K562 (cell line): ENCODE measurements at regions of chr6 and their contacts with region 1.

Region 1: DNA sequence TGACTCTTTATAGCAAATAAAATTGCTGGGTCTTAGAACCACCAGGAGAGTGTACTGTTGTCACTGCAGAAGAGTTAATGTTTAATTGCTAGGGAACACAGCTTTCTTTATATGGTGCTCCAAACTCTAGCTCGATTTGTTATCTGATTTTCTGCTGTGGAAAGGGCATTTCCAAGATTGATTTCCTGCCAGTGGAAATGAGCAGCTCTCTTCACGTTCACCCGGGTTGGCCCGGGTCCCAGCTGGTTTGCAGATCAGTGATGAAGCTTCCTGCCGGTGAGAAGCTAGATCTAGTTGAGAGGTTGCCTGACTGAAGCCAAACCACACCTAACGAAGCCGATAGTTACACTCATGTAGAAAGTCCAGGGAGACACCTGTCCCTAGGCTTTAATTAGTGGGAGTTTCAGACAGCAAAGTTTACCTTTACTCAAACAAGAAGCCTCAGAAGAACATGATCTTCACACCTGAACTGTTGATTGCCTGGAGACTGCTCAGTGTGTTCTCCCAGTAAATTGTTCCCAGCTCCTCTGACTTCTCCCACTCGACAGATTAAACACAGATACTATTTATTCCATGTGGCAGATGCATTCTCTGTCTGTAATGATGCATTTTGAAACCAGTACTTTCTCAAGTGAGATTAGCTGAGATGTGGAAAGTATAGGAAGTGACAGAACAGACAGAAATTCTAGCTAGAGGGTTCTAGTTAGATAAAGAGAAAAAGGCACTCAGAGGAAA is 27.8 kb downstream of the PAQR8 start:
- DNase-seq: peak; percentile 51 to 66 (median 60)
- ATAC-seq: peak; percentile 70
- H3K4me3 ChIP-seq: 0 out of 2 replicates have a peak overlapping the region, but pooled peaks have one; percentile 2
- H3K27ac ChIP-seq: peak overlapping the region; percentile 75
- H3K4me1 ChIP-seq: peaks cover 11 to 37% of the 10 kb centered on the region in 2 experiments; a peak in 4 of 5 replicates
- H3K27me3 ChIP-seq: no peaks in the 10 kb centered on the region
- CTCF ChIP-seq: no peak
- EP300 ChIP-seq: no peak
- POLR2A ChIP-seq: no peak
- RAD21 ChIP-seq: peak in 1 of 2 experiments; percentile 23; a peak in 3 of 4 replicates

Region 2: DNA sequence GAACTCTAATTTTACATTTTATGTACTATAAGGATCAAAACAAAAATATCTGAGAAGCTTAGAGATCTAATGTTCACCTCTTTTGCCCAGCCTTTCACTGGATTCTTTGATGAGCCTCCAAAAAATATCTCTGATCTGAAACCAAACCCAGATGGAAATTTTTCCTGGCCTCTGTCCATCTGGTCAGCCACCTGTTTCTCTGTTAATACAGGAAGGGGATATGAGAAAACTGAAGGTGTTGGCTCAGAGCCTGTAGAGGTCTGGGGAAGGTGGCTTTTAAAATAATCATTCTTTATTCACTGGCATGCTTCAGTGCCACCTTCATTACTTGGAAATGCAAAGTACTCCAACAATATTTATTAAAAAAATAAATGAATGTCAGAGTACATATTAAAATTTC is 96.7 kb before region 1 on chr6:
- CTCF ChIA-PET with region 1: no interaction called
- POLR2A ChIA-PET with region 1: no interaction called
- in situ Hi-C with region 1: loop called (anchors 5 kb)
- intact Hi-C with region 1: no loop called
- DNase-seq: no peak
- ATAC-seq: no peak
- H3K4me3 ChIP-seq: no peak overlapping the region
- H3K27ac ChIP-seq: no peak overlapping the region; the same call in 2 of the 3 replicates
- H3K4me1 ChIP-seq: peaks cover 3 to 10% of the 10 kb centered on the region in 2 experiments; a peak in 4 of 5 replicates
- H3K27me3 ChIP-seq: no peaks in the 10 kb centered on the region
- CTCF ChIP-seq: no peak
- EP300 ChIP-seq: no peak
- POLR2A ChIP-seq: no peak
- RAD21 ChIP-seq: no peak

Region 3: GRCh38 chr6:52517502-52518278 is 127.9 kb after region 1 on chr6:
- CTCF ChIA-PET with region 1: no interaction called
- POLR2A ChIA-PET with region 1: no interaction called
- in situ Hi-C with region 1: no loop called
- intact Hi-C with region 1: no loop called
- DNase-seq: peak; percentile 82 to 92 (median 86)
- ATAC-seq: peak; percentile 97
- H3K4me3 ChIP-seq: peak overlapping the region; percentile 23
- H3K27ac ChIP-seq: peak overlapping the region; percentile 90
- H3K4me1 ChIP-seq: peaks cover 29 to 51% of the 10 kb centered on the region in 2 experiments
- H3K27me3 ChIP-seq: no peaks in the 10 kb centered on the region
- CTCF ChIP-seq: 0 out of 6 replicates have a peak, but pooled peaks of 1 of the 3 experiments have one; percentile 6
- EP300 ChIP-seq: peak; percentile 68
- POLR2A ChIP-seq: peak; percentile 76
- RAD21 ChIP-seq: peak in 1 of 2 experiments; percentile 26; a peak in 2 of 4 replicates